OCI-LY7 (cell line): ENCODE measurements at regions of chr18 and their contacts with region 1.

Region 1: DNA sequence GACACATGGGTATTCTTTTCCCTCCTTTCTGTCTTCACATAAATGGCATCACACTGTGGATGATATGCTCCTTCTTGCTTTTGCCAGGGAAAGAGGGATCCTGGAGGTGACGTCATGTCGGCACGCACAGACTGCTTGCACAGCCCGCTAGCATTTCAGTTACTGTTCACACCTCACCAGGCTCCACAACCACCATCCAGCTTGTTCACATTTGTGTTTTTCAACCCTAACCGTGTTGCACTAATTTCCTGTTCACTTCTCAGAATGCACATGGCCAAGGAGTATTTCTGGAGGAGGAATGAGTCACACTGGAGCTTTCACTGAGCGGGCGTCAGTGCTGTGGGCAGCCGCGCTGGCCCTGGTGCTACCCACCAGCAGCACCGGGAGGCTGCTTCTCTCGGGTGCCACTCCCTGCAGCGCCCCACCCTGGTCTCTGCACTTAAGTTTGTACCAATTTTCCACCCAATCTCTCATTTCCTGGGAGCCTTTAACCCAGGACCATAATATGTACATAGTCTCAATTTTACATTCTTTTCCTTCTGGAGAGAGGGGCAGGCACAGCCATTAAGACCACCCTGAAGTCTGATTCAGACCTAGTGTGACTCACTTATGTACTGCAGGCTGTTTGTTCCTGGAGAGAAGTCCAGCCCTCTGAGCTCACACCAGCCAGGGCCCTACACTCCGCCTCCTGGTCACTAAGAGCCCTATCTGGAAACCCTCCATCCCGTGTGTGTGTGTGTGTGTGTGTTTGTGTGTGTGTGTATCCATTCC is 65.1 kb downstream of the MBP start:
- DNase-seq: no peak
- H3K4me3 ChIP-seq: no peak overlapping the region
- H3K27ac ChIP-seq: no peak overlapping the region
- H3K4me1 ChIP-seq: peaks cover 47% of the 10 kb centered on the region
- CTCF ChIP-seq: peak; percentile 39; the same call in 1 of the 2 replicates

Region 2: DNA sequence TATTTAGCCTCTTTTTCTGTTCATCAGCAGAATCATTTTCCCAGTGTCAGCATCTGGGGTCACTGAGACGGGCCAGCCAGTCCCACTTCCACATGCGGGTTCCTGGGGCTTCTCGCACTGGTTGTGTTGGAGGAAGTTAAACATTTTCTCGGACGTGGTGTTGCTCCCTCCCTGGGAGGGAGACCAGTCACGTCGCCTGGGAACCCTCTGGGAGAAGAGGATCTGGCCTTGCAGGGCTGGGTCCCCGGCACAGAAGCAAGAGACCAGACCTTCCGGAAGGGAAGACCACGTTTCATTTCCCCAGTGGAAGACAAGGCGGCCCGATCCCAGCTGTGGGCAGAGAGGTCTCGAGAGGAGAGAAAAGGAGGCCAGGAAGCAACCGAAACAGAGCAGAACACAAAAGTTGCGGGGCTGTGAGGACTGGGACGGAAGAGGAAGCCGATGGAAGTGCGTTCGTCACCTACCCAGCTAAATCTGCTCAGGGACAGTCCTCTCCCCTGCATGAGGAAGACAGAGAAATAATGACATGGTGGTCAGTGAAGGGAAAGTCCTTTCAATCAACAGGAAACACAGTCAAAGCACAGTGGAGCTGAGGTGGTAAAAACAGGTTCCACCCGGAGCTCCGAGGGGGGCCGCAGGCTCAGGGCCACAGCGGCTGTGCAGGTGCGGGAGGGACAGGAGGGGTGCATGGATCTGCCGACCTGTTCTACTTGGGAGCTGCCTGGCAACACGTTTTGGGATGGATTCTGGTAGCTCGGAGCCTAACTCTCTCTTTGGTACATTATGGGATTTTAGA is 79.2 kb before region 1 on chr18:
- CTCF ChIA-PET with region 1: no interaction called
- POLR2A ChIA-PET with region 1: no interaction called
- intact Hi-C with region 1: no loop called
- DNase-seq: no peak
- H3K4me3 ChIP-seq: no peak overlapping the region
- H3K27ac ChIP-seq: no peak overlapping the region
- H3K4me1 ChIP-seq: peaks cover 12% of the 10 kb centered on the region
- CTCF ChIP-seq: no peak

Region 3: DNA sequence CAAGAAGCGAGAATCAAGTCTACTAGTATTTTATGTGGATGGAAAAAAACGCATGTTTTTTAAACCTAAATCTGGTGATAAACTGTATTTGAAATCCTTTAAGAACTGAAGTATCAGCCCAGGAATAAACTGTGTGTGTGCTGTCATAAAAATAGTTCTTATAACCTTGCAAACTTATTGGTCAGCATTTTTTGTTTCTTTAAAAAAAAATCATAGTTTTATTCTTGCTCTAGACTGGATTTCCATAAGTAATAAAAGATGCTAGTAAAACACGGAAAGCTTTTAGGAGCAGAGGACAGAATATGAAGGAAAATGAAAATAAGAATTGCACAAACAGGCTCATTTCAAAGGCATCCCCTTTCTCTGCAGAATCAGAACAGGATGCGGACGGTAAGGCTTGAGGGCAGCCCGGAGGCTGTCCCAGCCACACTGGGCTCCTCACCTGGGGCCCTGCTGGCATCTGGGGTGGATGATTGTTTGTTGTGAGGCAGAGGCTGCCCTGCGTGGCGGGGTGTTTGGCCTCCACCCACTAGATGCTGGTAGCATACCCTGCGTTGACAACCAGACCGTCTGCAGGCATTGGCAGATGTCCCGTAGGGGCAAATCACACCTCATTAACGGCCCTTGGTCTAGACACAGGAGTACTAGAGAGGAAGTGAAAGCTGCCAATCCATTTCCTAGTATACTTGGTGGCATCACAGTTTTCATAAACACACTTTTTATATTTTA is 12.6 kb after region 1 on chr18:
- CTCF ChIA-PET with region 1: no interaction called
- POLR2A ChIA-PET with region 1: no interaction called
- intact Hi-C with region 1: loop called (anchors 1 kb)
- DNase-seq: peak; percentile 60
- H3K4me3 ChIP-seq: peak overlapping the region; percentile 32
- H3K27ac ChIP-seq: peak overlapping the region; percentile 46
- H3K4me1 ChIP-seq: peaks cover 21% of the 10 kb centered on the region
- CTCF ChIP-seq: no peak